GM12878 (cell line): ENCODE measurements at regions of chr9 and their contacts with region 1.

Region 1: GRCh38 chr9:7729371-7730163 is 70.0 kb downstream of the DMAC1 start:
- DNase-seq: no peak
- ATAC-seq: no peak
- H3K4me3 ChIP-seq: no peak overlapping the region
- H3K27ac ChIP-seq: no peak overlapping the region
- H3K4me1 ChIP-seq: no peaks in the 10 kb centered on the region
- H3K27me3 ChIP-seq: no peaks in the 10 kb centered on the region
- CTCF ChIP-seq: no peak
- EP300 ChIP-seq: no peak
- POLR2A ChIP-seq: no peak
- RAD21 ChIP-seq: no peak

Region 2: GRCh38 chr9:7780261-7780988 is 50.9 kb after region 1 on chr9:
- CTCF ChIA-PET with region 1: no interaction called
- POLR2A ChIA-PET with region 1: no interaction called
- RAD21 ChIA-PET with region 1: no interaction called
- SMC1A ChIA-PET with region 1: no interaction called
- in situ Hi-C with region 1: loop called (anchors 5 kb)
- intact Hi-C with region 1: no loop called
- DNase-seq: no peak
- ATAC-seq: no peak
- H3K4me3 ChIP-seq: no peak overlapping the region
- H3K27ac ChIP-seq: no peak overlapping the region
- H3K4me1 ChIP-seq: no peaks in the 10 kb centered on the region
- H3K27me3 ChIP-seq: no peaks in the 10 kb centered on the region
- CTCF ChIP-seq: no peak
- EP300 ChIP-seq: no peak
- POLR2A ChIP-seq: no peak
- RAD21 ChIP-seq: no peak